ENCODE measurements at regions of chr14 and their contacts with region 1.

Region 1: DNA sequence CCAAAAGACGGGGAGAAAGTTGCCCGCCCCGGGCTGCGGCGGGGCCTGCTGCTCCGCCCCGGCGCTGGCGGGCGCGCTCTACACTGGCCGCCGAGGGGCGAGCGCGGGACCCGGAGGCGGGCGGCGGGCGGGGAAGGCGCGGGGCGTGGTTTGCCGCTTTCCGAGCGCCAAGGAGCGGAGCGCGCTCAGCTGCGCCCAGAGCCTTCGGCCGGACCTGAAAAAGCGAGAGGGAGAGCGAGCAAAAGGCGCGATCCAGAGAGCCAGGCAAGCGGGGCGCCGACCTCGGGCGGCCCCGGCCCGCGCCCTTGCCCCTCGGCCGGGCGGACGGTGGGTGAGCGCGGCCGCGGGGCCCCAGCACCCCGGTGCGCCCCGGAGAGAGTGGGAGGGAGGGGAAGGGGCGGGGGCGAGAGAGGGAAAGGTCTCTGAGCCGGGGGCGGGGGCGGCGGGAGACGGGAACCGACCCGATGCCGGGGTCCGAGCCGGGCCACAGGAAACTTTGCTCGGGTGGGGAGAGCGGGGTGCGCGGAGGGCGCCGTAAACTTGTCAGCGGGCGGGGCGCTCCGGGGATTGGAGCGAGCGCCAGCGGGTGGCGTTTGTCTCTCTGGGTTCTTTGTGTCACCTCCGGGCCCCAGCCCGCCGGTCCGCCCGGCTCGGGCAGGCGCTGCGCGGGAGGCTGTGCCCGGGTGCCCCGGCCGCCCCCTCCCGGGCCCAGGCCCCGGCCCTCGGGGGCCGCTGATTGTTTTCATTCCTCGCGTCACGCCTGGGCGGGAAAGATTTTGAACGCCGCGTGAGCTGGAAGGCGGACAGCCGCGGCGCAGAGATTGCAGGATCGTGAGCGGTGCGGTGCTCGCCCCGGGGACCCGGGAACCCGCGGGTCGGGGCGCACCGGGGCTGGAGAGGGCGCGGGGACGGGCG is at the start of gene SYNE2:
- DNase-seq: peak; percentile 91
- H3K4me3 ChIP-seq: peak within 1 kb of the TSS; percentile 92
- H3K27ac ChIP-seq: peak within 1 kb of the TSS; percentile 83
- H3K4me1 ChIP-seq: peaks cover 37% of the 10 kb centered on the region
- CTCF ChIP-seq: peak; percentile 56
- total RNA-seq, gene SYNE2: 131 and 150 TPM in 2 replicates

Region 2: GRCh38 chr14:63867933-63868921 is 15.2 kb after region 1 on chr14:
- CTCF ChIA-PET with region 1: no interaction called
- POLR2A ChIA-PET with region 1: interaction called, 22 read pairs
- intact Hi-C with region 1: loop called (anchors 1 kb)
- DNase-seq: peak; percentile 84
- H3K4me3 ChIP-seq: peak overlapping the region; percentile 27
- H3K27ac ChIP-seq: peak overlapping the region; percentile 89
- H3K4me1 ChIP-seq: peaks cover 88% of the 10 kb centered on the region
- CTCF ChIP-seq: no peak

Region 3: DNA sequence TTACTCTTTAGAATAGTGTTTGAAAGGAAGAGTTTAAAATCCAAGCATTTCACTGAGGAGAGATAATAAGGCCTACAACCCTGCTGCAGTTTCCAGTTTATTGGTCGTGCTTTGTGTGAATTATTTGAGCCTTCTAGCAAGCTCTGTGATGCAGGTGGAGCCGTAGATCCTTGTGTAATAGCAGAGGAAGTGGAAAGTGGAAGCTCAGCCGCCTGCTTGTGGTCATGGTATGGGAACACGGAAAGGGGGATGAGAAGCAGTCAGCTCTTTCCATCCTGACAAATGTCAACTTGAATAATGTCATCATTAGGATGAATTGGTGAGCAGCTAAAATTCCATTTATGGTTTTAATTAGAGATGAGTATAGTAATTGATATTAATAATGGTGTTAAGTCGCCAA is 28.9 kb after region 1 on chr14:
- CTCF ChIA-PET with region 1: no interaction called
- POLR2A ChIA-PET with region 1: no interaction called
- intact Hi-C with region 1: no loop called
- DNase-seq: no peak
- H3K4me3 ChIP-seq: no peak overlapping the region
- H3K27ac ChIP-seq: no peak overlapping the region
- H3K4me1 ChIP-seq: peaks cover 10% of the 10 kb centered on the region
- CTCF ChIP-seq: no peak

Region 4: GRCh38 chr14:63893701-63894458 is 40.8 kb after region 1 on chr14:
- CTCF ChIA-PET with region 1: no interaction called
- POLR2A ChIA-PET with region 1: interaction called, 3 read pairs
- intact Hi-C with region 1: loop called (anchors 1 kb)
- DNase-seq: no peak
- H3K4me3 ChIP-seq: no peak overlapping the region
- H3K27ac ChIP-seq: no peak overlapping the region
- H3K4me1 ChIP-seq: peaks cover 34% of the 10 kb centered on the region
- CTCF ChIP-seq: no peak

Region 5: GRCh38 chr14:63940387-63940786 is 87.3 kb after region 1 on chr14:
- CTCF ChIA-PET with region 1: no interaction called
- POLR2A ChIA-PET with region 1: no interaction called
- intact Hi-C with region 1: loop called (anchors 5 kb)
- DNase-seq: peak; percentile 70
- H3K4me3 ChIP-seq: peak overlapping the region; percentile 4
- H3K27ac ChIP-seq: peak overlapping the region; percentile 70
- H3K4me1 ChIP-seq: peaks cover 40% of the 10 kb centered on the region
- CTCF ChIP-seq: no peak

Region 6: DNA sequence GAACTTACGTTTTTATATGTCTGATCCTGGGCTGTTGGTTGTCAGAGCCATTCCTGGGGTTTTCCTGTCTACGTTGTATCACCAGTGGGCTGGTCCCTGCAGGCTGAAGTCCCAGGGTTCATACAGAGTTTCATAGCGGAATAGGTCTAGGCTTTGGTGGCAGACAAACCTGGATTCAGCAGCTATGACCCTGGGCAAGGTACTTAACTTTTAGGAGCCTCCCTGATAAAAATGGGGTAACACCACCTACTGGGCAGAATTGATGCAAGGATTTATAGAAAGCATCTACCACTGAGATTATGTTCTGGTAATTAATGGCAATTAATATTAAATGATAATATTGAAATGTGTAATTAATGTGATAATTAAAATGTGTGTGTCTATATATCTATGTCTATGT is 140.9 kb after region 1 on chr14:
- CTCF ChIA-PET with region 1: no interaction called
- POLR2A ChIA-PET with region 1: no interaction called
- intact Hi-C with region 1: loop called (anchors 2 kb)
- DNase-seq: peak; percentile 25
- H3K4me3 ChIP-seq: no peak overlapping the region
- H3K27ac ChIP-seq: no peak overlapping the region
- H3K4me1 ChIP-seq: no peaks in the 10 kb centered on the region
- CTCF ChIP-seq: peak; percentile 65

Region 7: GRCh38 chr14:64387694-64388532 is 534.8 kb after region 1 on chr14 and contains the start of gene MTHFD1:
- CTCF ChIA-PET with region 1: no interaction called
- POLR2A ChIA-PET with region 1: no interaction called
- intact Hi-C with region 1: no loop called
- DNase-seq: peak; percentile 98
- H3K4me3 ChIP-seq: peak within 1 kb of the TSS; percentile 85
- H3K27ac ChIP-seq: peak within 1 kb of the TSS; percentile 78
- H3K4me1 ChIP-seq: peaks cover 26% of the 10 kb centered on the region
- CTCF ChIP-seq: no peak
- total RNA-seq, gene MTHFD1: 73.7 and 100 TPM in 2 replicates

Measured in OCI-LY7 (cell line).